ENCODE measurements at regions of chr2 and their contacts with region 1.

Region 1: GRCh38 chr2:22355816-22356433 is 1029.1 kb upstream of the KLHL29 start:
- DNase-seq: peak; percentile 56
- H3K4me3 ChIP-seq: peak overlapping the region in 1 of 2 experiments; percentile 42; a peak in 1 of 4 replicates
- H3K27ac ChIP-seq: no peak overlapping the region
- H3K4me1 ChIP-seq: no peaks in the 10 kb centered on the region
- H3K27me3 ChIP-seq: no peaks in the 10 kb centered on the region
- CTCF ChIP-seq: peak; percentile 68
- EP300 ChIP-seq: no peak
- RAD21 ChIP-seq: peak; percentile 84

Region 2: GRCh38 chr2:22340716-22341115 is 15.2 kb before region 1 on chr2:
- CTCF ChIA-PET with region 1: interaction called, 38 read pairs
- POLR2A ChIA-PET with region 1: no interaction called
- DNase-seq: no peak
- H3K4me3 ChIP-seq: no peak overlapping the region
- H3K27ac ChIP-seq: no peak overlapping the region
- H3K4me1 ChIP-seq: peaks cover 0 to 8% of the 10 kb centered on the region in 2 experiments; a peak in 2 of 4 replicates
- H3K27me3 ChIP-seq: no peaks in the 10 kb centered on the region
- CTCF ChIP-seq: no peak
- EP300 ChIP-seq: no peak
- RAD21 ChIP-seq: no peak

Region 3: DNA sequence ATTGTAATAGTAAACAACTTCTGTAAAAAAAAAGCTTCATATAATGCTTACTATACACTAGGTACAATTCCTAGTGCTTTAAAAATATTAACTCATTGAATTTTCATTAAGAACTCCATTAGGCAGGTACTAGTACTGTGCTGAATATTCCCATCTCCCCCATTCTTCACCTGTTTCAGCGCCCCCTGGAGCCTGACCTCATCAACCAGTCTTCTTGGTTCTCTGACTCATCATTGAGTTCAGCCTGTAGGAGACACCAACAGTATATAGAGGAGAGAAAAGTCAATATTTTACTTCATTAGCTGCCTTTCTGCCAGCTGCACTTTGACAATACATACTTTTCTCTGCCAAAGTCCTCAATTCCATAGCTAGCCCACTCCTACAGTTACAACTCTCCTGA is 19.2 kb after region 1 on chr2:
- CTCF ChIA-PET with region 1: interaction called, 29 read pairs
- POLR2A ChIA-PET with region 1: no interaction called
- DNase-seq: no peak
- H3K4me3 ChIP-seq: peak overlapping the region in 1 of 2 experiments; percentile 26; a peak in 1 of 4 replicates
- H3K27ac ChIP-seq: no peak overlapping the region
- H3K4me1 ChIP-seq: no peaks in the 10 kb centered on the region
- H3K27me3 ChIP-seq: no peaks in the 10 kb centered on the region
- CTCF ChIP-seq: no peak
- EP300 ChIP-seq: no peak
- RAD21 ChIP-seq: no peak

Measured in SK-N-SH (cell line).